ENCODE measurements at regions of chr6 and their contacts with region 1.

Region 1: DNA sequence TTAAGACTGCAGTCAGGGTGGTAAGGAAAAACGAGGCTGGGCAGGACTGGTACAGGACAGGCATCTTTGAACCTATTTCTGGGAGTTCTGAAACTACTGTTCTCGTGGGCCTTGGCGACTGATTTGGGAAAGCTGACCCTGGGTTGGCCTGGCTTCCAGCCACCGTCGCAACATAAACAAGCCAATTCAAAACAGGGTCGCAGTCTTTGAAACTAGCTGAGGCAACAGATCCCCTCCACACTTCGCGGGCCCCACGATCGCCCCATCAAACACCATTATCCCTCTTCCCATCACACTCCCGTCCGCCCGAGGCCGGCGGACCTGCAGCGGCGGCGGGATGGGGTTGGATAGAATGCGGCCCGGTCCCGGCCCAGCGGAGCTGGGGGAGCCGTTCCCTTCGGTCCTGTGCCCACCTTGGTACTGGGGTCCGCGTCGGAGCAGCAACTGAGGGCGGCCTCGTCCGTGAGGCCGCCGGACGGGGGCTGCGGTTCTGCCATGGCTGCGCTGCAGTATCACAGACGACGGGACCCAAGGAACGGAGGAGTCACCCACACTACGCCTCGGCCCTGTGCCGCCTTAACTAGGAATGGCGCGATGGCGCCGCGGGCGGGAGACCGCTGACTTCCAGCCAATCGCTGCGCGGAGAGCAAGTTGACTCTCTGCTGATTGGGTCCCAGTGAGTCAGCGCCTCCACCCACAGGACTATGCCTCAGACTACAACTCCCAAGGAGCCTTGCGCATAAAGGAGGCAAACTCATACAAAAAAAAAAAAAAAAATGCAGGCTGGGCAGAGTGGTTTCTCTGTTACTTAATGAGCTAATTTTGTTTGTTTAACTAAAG is at the start of gene GLO1:
- DNase-seq: peak; percentile 84 to 96 (median 94)
- ATAC-seq: peak; percentile 100
- H3K4me3 ChIP-seq: peak within 1 kb of the TSS; percentile 81
- H3K4me3 Mint-ChIP-seq: peak within 1 kb of the TSS; percentile 77 to 99 (median 90)
- H3K27ac ChIP-seq: peak within 1 kb of the TSS; percentile 81
- H3K27ac Mint-ChIP-seq: peak within 1 kb of the TSS; percentile 76 to 95 (median 91)
- H3K4me1 ChIP-seq: peaks cover 0 to 4% of the 10 kb centered on the region in 2 donors
- H3K4me1 Mint-ChIP-seq: peaks cover 8 to 50% (median 28%) of the 10 kb centered on the region in 7 donors
- H3K27me3 ChIP-seq: no peaks in the 10 kb centered on the region
- H3K27me3 Mint-ChIP-seq: peaks cover 13 to 18% (median 16%) of the 10 kb centered on the region in 5 donors
- total RNA-seq, gene GLO1: 16.0 to 103 (median 22.3) TPM

Region 2: DNA sequence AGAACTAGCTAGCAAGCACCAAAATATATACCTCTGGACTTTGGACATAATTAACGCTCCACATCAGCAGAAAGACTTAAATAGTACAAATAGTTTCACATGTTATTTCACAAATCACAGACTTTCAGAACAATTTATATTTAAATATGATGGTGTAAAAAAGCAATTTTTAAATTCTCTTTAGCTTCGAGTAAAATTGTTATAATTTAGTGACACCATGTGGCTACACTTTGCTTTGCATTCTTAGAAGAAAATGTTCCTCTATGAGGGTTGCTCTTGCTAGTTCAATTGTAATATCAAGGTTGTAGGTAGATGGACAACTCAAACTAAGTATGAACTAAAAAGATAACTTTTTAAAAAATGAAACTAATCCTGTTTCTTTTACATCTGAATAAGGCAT is 132.0 kb before region 1 on chr6:
- CTCF ChIA-PET with region 1: no interaction called
- POLR2A ChIA-PET with region 1: no interaction called
- intact Hi-C with region 1: loop called (anchors 1 kb)
- DNase-seq: peak in 4 of 9 donors; percentile 7 to 20 (median 10)
- ATAC-seq: no peak
- H3K4me3 ChIP-seq: no peak overlapping the region
- H3K4me3 Mint-ChIP-seq: peak overlapping the region in 3 of 10 donors; percentile 9 to 77 (median 26)
- H3K27ac ChIP-seq: no peak overlapping the region
- H3K27ac Mint-ChIP-seq: peak overlapping the region in 6 of 9 donors; percentile 68 to 95 (median 89)
- H3K4me1 ChIP-seq: peaks cover 7 to 8% of the 10 kb centered on the region in 2 donors
- H3K4me1 Mint-ChIP-seq: peaks cover 19 to 32% (median 24%) of the 10 kb centered on the region in 7 donors
- H3K27me3 ChIP-seq: no peaks in the 10 kb centered on the region
- H3K27me3 Mint-ChIP-seq: peaks cover 0 to 2% (median 0%) of the 10 kb centered on the region in 5 donors

Region 3: GRCh38 chr6:38639498-38640215 is 63.1 kb before region 1 on chr6 and contains the start of gene BTBD9:
- CTCF ChIA-PET with region 1: no interaction called
- POLR2A ChIA-PET with region 1: interaction called, 9 read pairs
- intact Hi-C with region 1: loop called (anchors 1 kb)
- DNase-seq: peak; percentile 83 to 92 (median 90)
- ATAC-seq: peak; percentile 87
- H3K4me3 ChIP-seq: peak within 1 kb of the TSS; percentile 90
- H3K4me3 Mint-ChIP-seq: peak within 1 kb of the TSS; percentile 74 to 94 (median 90)
- H3K27ac ChIP-seq: peak within 1 kb of the TSS; percentile 94
- H3K27ac Mint-ChIP-seq: peak within 1 kb of the TSS; percentile 88 to 96 (median 91)
- H3K4me1 ChIP-seq: peaks cover 16 to 22% of the 10 kb centered on the region in 2 donors
- H3K4me1 Mint-ChIP-seq: peaks cover 40 to 65% (median 57%) of the 10 kb centered on the region in 7 donors
- H3K27me3 ChIP-seq: no peaks in the 10 kb centered on the region
- H3K27me3 Mint-ChIP-seq: no peaks in the 10 kb centered on the region
- total RNA-seq, gene BTBD9: 20.6 to 58.8 (median 43.6) TPM

Region 4: DNA sequence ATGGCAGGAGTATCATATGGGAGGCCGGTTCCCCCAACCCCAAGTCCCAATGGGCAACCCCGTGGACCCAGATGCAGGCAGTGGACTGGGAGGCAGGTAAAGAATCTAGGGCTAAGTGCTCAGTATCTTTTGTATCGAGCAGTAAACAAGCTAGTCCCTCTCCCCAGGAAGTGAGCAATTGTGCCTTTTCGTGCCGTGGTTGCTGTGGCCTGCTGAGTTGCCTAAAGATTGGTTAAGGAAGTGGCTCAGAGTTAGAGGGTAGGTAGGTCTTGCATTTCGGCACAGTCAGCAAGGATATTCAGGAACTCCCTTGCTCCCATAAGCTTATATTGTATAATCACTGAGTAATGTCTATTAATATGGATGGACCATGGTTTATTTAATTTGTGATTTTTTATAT is 11.0 kb after region 1 on chr6:
- CTCF ChIA-PET with region 1: no interaction called
- POLR2A ChIA-PET with region 1: interaction called, 3 read pairs
- intact Hi-C with region 1: loop called (anchors 1 kb)
- DNase-seq: peak in 2 of 9 donors; percentile 7 to 65
- ATAC-seq: peak; percentile 81
- H3K4me3 ChIP-seq: no peak overlapping the region
- H3K4me3 Mint-ChIP-seq: peak overlapping the region in 2 of 10 donors; percentile 67 to 83
- H3K27ac ChIP-seq: no peak overlapping the region
- H3K27ac Mint-ChIP-seq: peak overlapping the region in 1 of 9 donors; percentile 96
- H3K4me1 ChIP-seq: peaks cover 5 to 14% of the 10 kb centered on the region in 2 donors
- H3K4me1 Mint-ChIP-seq: peaks cover 11 to 43% (median 20%) of the 10 kb centered on the region in 7 donors
- H3K27me3 ChIP-seq: peaks cover 0 to 6% of the 10 kb centered on the region in 2 donors
- H3K27me3 Mint-ChIP-seq: peaks cover 20 to 51% (median 33%) of the 10 kb centered on the region in 5 donors

Region 5: GRCh38 chr6:39228992-39229767 is 526.4 kb after region 1 on chr6 and contains the start of gene KCNK5:
- CTCF ChIA-PET with region 1: no interaction called
- POLR2A ChIA-PET with region 1: no interaction called
- intact Hi-C with region 1: loop called in 1 of 2 experiments (anchors 5 kb)
- DNase-seq: peak; percentile 5 to 91 (median 42)
- ATAC-seq: peak; percentile 88
- H3K4me3 ChIP-seq: peak within 1 kb of the TSS; percentile 54
- H3K4me3 Mint-ChIP-seq: peak within 1 kb of the TSS; percentile 61 to 86 (median 72)
- H3K27ac ChIP-seq: no peak within 1 kb of the TSS
- H3K27ac Mint-ChIP-seq: peak within 1 kb of the TSS in 2 of 9 donors; percentile 51 to 91
- H3K4me1 ChIP-seq: peaks cover 18 to 43% of the 10 kb centered on the region in 2 donors
- H3K4me1 Mint-ChIP-seq: peaks cover 15 to 48% (median 33%) of the 10 kb centered on the region in 7 donors
- H3K27me3 ChIP-seq: no peaks in the 10 kb centered on the region
- H3K27me3 Mint-ChIP-seq: peaks cover 0 to 12% (median 6%) of the 10 kb centered on the region in 5 donors
- total RNA-seq, gene KCNK5: 0.24 to 9.6 (median 0.34) TPM in 3 of 5 experiments, not detected in the others

Region 6: DNA sequence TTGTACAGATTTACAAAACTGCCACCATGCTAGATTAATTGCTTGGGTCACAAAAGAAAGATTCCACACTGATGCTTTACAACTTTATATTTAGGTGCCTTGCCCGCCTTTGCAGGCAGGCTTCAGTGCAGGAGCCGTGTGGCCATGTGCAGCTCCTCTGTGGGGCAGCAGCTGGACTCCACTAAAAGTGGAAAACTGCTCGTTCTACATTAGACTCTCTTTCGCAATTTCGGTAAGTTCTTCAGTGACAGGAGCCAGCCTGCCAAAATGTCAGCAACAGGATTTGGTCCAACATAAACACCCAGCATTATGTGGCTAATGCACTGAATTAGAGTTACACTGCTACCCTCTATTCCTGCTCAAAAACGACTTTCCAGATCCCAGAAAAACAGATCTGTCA is 794.1 kb after region 1 on chr6:
- CTCF ChIA-PET with region 1: no interaction called
- POLR2A ChIA-PET with region 1: no interaction called
- intact Hi-C with region 1: no loop called
- DNase-seq: no peak
- ATAC-seq: no peak
- H3K4me3 ChIP-seq: no peak overlapping the region
- H3K4me3 Mint-ChIP-seq: no peak overlapping the region
- H3K27ac ChIP-seq: no peak overlapping the region
- H3K27ac Mint-ChIP-seq: no peak overlapping the region
- H3K4me1 ChIP-seq: no peaks in the 10 kb centered on the region
- H3K4me1 Mint-ChIP-seq: no peaks in the 10 kb centered on the region
- H3K27me3 ChIP-seq: no peaks in the 10 kb centered on the region
- H3K27me3 Mint-ChIP-seq: peaks cover 17 to 65% (median 46%) of the 10 kb centered on the region in 5 donors

Region 7: GRCh38 chr6:39724787-39725631 is 1022.2 kb after region 1 on chr6 and contains the start of gene KIF6:
- CTCF ChIA-PET with region 1: no interaction called
- POLR2A ChIA-PET with region 1: no interaction called
- intact Hi-C with region 1: loop called in 1 of 2 experiments (anchors 10 kb)
- DNase-seq: peak; percentile 50 to 85 (median 77)
- ATAC-seq: peak; percentile 99
- H3K4me3 ChIP-seq: peak within 1 kb of the TSS; percentile 68
- H3K4me3 Mint-ChIP-seq: peak within 1 kb of the TSS; percentile 92 to 98 (median 97)
- H3K27ac ChIP-seq: no peak within 1 kb of the TSS
- H3K27ac Mint-ChIP-seq: peak within 1 kb of the TSS; percentile 10 to 91 (median 72)
- H3K4me1 ChIP-seq: peaks cover 0 to 3% of the 10 kb centered on the region in 2 donors
- H3K4me1 Mint-ChIP-seq: peaks cover 0 to 9% (median 7%) of the 10 kb centered on the region in 7 donors
- H3K27me3 ChIP-seq: no peaks in the 10 kb centered on the region
- H3K27me3 Mint-ChIP-seq: peaks cover 0 to 6% (median 4%) of the 10 kb centered on the region in 5 donors
- total RNA-seq, gene KIF6: not detected